CD8-positive, alpha-beta T cell (primary cell): ENCODE measurements at regions of chr1 and their contacts with region 1.

Region 1: GRCh38 chr1:24744911-24745710 is at the start of gene CLIC4:
- DNase-seq: peak; percentile 97 to 100 (median 99)
- ATAC-seq: peak; percentile 92
- H3K4me3 ChIP-seq: peak within 1 kb of the TSS; percentile 52 to 54
- H3K4me3 Mint-ChIP-seq: peak within 1 kb of the TSS; percentile 86
- H3K27ac ChIP-seq: no peak within 1 kb of the TSS
- H3K27ac Mint-ChIP-seq: peak within 1 kb of the TSS; percentile 72
- H3K4me1 ChIP-seq: peaks cover 8% of the 10 kb centered on the region
- H3K4me1 Mint-ChIP-seq: peaks cover 27% of the 10 kb centered on the region
- H3K27me3 ChIP-seq: peaks cover 0 to 3% of the 10 kb centered on the region in 2 experiments
- H3K27me3 Mint-ChIP-seq: peaks cover 6% of the 10 kb centered on the region
- CTCF ChIP-seq: no peak
- total RNA-seq, gene CLIC4: 1.2 to 1.3 TPM

Region 2: DNA sequence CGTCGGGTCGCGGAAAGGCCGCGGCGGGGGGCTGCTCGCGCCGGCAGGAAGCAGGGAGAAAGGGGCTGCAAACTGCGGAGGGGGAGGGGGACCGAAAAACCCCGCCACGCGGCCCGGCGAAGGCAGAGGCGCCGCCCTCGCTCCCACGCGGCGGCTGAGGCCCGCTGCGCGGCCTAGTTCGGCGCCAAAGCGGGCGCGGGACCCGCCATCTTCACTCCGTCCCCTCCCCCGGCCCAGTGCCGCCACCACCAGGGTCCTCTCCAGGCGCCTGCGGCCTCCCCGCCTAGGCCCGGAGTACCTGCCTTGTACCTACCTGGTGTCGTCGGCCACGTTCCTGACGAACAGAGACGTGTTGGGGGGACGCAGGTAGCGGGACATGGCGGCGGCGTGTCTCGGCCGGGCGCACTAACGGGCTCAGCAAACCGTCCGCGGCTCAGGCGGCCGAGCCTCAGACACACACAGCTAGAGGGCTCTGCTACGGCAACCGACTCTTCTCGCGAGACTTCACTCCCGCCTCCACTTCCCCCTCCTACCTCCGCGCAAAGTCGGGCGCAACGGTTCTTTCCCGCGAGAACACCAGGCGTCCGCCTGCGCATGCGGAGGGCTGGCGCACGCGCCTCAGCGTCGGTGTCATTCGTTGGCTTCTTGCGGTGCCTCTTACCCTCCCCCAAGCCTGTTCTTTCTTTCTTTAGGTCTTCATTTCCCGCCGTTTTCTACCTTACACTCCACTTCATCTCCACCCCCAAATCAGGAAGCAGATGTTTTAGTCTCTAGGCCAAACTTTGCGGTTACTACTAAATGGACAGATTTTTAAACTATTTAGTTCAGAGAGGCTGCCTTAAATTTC is 765.0 kb before region 1 on chr1 and contains the start of gene SRSF10:
- CTCF ChIA-PET with region 1: no interaction called
- POLR2A ChIA-PET with region 1: no interaction called
- intact Hi-C with region 1: loop called in 1 of 2 experiments (anchors 10 kb)
- DNase-seq: peak; percentile 94 to 100 (median 97)
- ATAC-seq: peak; percentile 96
- H3K4me3 ChIP-seq: peak within 1 kb of the TSS; percentile 87 to 94
- H3K4me3 Mint-ChIP-seq: peak within 1 kb of the TSS; percentile 92
- H3K27ac ChIP-seq: peak within 1 kb of the TSS; percentile 92 to 98
- H3K27ac Mint-ChIP-seq: peak within 1 kb of the TSS; percentile 92
- H3K4me1 ChIP-seq: peaks cover 41% of the 10 kb centered on the region
- H3K4me1 Mint-ChIP-seq: peaks cover 52% of the 10 kb centered on the region
- H3K27me3 ChIP-seq: no peaks in the 10 kb centered on the region
- H3K27me3 Mint-ChIP-seq: no peaks in the 10 kb centered on the region
- CTCF ChIP-seq: peak; percentile 18
- total RNA-seq, gene SRSF10: 321 to 335 TPM

Region 3: GRCh38 chr1:24186993-24187805 is 557.9 kb before region 1 on chr1 and contains the start of gene IFNLR1:
- CTCF ChIA-PET with region 1: no interaction called
- POLR2A ChIA-PET with region 1: no interaction called
- intact Hi-C with region 1: loop called in 1 of 2 experiments (anchors 2 kb)
- DNase-seq: peak; percentile 22 to 91 (median 73)
- ATAC-seq: peak; percentile 85
- H3K4me3 ChIP-seq: peak within 1 kb of the TSS; percentile 51 to 81
- H3K4me3 Mint-ChIP-seq: peak within 1 kb of the TSS; percentile 85
- H3K27ac ChIP-seq: peak within 1 kb of the TSS; percentile 32 to 56
- H3K27ac Mint-ChIP-seq: peak within 1 kb of the TSS; percentile 80
- H3K4me1 ChIP-seq: peaks cover 29% of the 10 kb centered on the region
- H3K4me1 Mint-ChIP-seq: peaks cover 56% of the 10 kb centered on the region
- H3K27me3 ChIP-seq: no peaks in the 10 kb centered on the region
- H3K27me3 Mint-ChIP-seq: no peaks in the 10 kb centered on the region
- CTCF ChIP-seq: no peak
- total RNA-seq, gene IFNLR1: 4.1 to 5.6 TPM

Region 4: DNA sequence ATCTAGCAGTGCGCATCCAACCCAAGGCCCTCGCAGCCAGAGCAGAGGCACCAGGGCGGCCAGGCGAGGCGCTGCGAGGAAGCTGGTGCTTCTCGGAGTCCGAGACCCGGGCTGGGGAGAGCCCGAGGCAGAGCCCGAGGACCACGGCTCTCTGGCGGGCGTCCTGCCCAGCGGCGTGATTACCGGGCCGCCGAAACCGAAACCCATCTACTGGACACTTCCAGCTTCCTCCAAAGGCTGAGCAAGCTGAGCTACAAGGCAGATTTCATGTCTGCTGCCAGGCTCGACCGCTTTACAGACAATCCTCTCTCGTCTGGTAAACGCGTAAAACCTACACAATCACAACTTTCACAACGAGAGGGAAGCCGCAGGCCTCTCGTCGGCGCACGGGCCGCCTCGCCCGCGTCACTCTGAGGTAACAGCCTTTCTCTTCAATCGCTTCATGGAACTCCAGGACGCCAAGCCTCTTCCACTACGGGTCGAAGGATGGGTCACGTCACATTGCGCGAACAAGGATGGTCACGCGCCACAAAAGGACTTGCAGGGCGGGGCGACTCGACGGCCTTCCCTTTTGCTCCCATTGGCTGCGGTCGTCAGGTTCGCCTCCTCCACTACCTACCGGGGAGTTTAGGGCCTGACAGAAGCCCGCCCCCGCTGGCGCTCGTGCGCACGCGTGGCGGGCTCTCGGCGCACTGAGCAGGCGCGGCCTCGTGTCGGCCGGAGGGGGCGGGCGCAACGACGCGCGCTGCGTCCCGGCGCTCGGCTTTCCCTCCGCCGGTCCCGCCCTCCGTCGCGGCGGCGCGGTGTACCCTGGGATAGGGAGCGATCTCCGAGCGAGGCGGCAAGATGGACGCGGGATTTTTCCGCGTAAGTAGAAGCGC is 102.4 kb before region 1 on chr1 and contains the start of gene SRRM1:
- CTCF ChIA-PET with region 1: no interaction called
- POLR2A ChIA-PET with region 1: interaction called, 4 read pairs
- intact Hi-C with region 1: loop called (anchors 1 to 2 kb)
- DNase-seq: peak; percentile 96 to 100 (median 98)
- ATAC-seq: peak; percentile 86
- H3K4me3 ChIP-seq: peak within 1 kb of the TSS; percentile 89 to 98
- H3K4me3 Mint-ChIP-seq: peak within 1 kb of the TSS; percentile 88
- H3K27ac ChIP-seq: peak within 1 kb of the TSS; percentile 98 to 100
- H3K27ac Mint-ChIP-seq: peak within 1 kb of the TSS; percentile 99
- H3K4me1 ChIP-seq: peaks cover 32% of the 10 kb centered on the region
- H3K4me1 Mint-ChIP-seq: peaks cover 41% of the 10 kb centered on the region
- H3K27me3 ChIP-seq: no peaks in the 10 kb centered on the region
- H3K27me3 Mint-ChIP-seq: no peaks in the 10 kb centered on the region
- CTCF ChIP-seq: no peak
- total RNA-seq, gene SRRM1: 460 to 474 TPM

Region 5: GRCh38 chr1:24673336-24673735 is 71.8 kb before region 1 on chr1:
- CTCF ChIA-PET with region 1: no interaction called
- POLR2A ChIA-PET with region 1: no interaction called
- intact Hi-C with region 1: loop called in 1 of 2 experiments (anchors 5 kb)
- DNase-seq: no peak
- ATAC-seq: no peak
- H3K4me3 ChIP-seq: no peak overlapping the region
- H3K4me3 Mint-ChIP-seq: no peak overlapping the region
- H3K27ac ChIP-seq: no peak overlapping the region
- H3K27ac Mint-ChIP-seq: peak overlapping the region; percentile 45
- H3K4me1 ChIP-seq: no peaks in the 10 kb centered on the region
- H3K4me1 Mint-ChIP-seq: no peaks in the 10 kb centered on the region
- H3K27me3 ChIP-seq: no peaks in the 10 kb centered on the region
- H3K27me3 Mint-ChIP-seq: no peaks in the 10 kb centered on the region
- CTCF ChIP-seq: no peak

Region 6: DNA sequence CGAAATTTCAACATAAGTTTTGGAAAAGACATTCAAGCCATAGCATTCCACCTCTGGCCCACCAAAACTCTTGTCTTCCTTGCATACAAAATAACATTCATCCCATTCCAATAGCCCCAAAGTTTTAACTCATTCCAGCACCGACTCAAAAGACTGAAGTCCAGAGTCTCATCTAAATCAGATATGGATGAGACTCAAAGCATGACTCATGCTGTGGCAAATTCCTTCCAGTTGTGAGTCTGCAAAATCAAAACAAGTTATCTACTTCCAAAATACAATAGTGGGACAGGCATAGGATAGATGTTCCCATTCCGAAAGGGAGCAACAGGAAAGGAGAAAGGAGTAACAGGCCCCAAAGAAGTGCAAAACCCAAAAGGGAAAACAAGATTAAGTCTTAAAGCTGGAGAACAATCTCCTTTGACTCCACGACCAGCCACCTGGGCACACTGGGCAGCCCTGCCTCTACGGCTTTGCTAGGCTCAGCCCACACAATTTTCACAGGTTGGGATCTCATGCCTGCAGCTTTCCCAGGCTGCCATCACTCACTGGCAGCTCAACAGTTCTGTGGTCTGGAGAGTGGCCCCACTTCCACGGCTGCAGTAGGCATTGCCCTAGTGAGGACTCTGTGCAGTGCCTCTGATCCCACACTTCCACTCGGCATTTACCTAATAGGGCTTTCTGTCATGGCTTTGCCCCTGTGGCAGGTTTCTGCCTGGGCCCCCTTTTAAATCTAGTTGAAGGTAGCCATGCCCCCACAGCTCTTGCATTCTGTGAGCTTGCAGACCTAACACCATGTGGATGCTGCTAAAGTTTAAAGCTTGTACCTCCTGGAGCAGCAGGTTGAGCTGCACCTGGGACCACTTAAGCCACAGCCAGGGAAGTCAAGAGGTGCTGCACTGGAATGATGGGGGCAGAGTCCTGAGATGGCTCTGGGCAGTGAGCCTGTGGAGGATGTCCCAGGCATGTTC is 133.9 kb after region 1 on chr1:
- CTCF ChIA-PET with region 1: no interaction called
- POLR2A ChIA-PET with region 1: no interaction called
- intact Hi-C with region 1: no loop called
- DNase-seq: no peak
- ATAC-seq: no peak
- H3K4me3 ChIP-seq: no peak overlapping the region
- H3K4me3 Mint-ChIP-seq: no peak overlapping the region
- H3K27ac ChIP-seq: no peak overlapping the region
- H3K27ac Mint-ChIP-seq: no peak overlapping the region
- H3K4me1 ChIP-seq: no peaks in the 10 kb centered on the region
- H3K4me1 Mint-ChIP-seq: no peaks in the 10 kb centered on the region
- H3K27me3 ChIP-seq: no peaks in the 10 kb centered on the region
- H3K27me3 Mint-ChIP-seq: no peaks in the 10 kb centered on the region
- CTCF ChIP-seq: no peak

Region 7: DNA sequence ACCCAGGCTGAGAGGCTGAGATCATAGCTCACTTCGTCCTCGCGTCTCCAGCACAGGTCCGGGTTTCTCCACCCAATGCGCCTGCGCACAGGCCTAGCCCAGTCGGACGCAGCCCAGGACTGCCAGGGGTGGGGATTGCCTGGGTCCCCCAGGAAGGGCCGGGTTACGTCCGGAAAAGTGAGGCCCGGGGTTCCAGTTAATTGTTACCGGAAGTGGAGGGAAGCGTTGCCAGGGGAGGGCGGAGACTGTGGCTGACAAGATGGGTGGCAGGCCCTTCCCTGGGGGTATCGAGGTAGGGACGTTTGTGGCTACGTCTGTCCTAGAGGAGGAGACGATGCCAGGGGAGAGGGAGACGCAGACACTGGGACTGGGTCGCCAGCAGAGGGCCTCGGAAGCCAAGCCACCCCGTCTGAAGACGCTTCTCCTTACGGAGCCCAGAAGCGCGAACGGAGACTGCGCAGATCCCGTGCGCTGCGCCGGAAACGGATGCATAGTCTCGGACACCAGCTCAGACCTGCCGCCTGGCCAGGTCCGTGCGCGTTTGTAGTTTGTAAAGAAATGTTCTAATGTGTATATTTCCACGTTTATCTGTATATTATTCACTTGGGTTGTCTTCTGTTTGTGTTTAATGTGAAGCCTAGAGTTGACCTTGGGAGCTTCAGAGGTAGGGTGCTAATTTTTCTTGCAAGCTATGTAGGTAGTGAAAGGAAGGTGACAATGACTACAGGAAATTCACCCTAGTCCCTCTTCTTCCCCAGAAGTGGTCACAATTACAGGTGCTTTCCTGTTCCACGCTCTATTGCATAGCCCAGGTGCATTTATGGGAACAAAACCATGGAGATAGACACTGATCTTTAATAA is 494.8 kb after region 1 on chr1:
- CTCF ChIA-PET with region 1: no interaction called
- POLR2A ChIA-PET with region 1: interaction called, 3 read pairs
- intact Hi-C with region 1: loop called in 1 of 2 experiments (anchors 10 kb)
- DNase-seq: peak; percentile 64 to 94 (median 82)
- ATAC-seq: peak; percentile 84
- H3K4me3 ChIP-seq: peak overlapping the region; percentile 37 to 60
- H3K4me3 Mint-ChIP-seq: peak overlapping the region; percentile 92
- H3K27ac ChIP-seq: peak overlapping the region; percentile 64 to 88
- H3K27ac Mint-ChIP-seq: peak overlapping the region; percentile 97
- H3K4me1 ChIP-seq: peaks cover 47% of the 10 kb centered on the region
- H3K4me1 Mint-ChIP-seq: peaks cover 61% of the 10 kb centered on the region
- H3K27me3 ChIP-seq: no peaks in the 10 kb centered on the region
- H3K27me3 Mint-ChIP-seq: no peaks in the 10 kb centered on the region
- CTCF ChIP-seq: peak; percentile 61